Activated B cell treated with CpG ODN at 0.5 μM for 24 hours (primary cell): ENCODE measurements at regions of chr4 and their contacts with region 1.

Region 1: DNA sequence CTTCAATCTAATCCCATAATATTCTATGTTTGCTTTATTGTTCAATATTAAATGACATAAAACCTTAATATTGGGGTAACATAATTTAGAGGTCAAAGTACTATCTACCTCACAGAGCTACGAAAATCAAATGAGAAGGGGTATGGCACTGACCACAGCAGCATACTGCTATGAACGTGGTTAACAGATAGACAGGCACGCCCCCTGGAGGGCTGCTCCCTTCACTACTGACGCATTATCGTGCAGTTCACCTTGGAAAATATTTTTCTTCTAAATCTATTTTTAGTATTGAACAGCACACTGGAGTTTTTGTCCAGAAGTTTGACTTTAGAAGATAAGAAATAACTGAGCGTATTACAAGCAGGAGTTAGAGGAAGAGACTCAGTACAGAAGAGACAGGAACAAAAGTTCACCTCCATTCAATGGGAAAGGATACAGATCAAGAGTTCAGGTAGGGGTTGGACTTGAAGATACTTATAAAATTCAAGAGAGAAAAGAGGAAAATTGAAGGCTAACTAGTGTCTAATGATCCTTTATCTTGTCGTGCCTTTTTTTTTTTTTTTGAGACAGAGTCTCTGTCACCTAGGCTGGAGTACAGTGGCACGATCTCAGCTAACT is 22.7 kb downstream of the MAP9 start:
- DNase-seq: no peak
- ATAC-seq: peak; percentile 28
- H3K4me3 Mint-ChIP-seq: no peak overlapping the region
- H3K27ac Mint-ChIP-seq: no peak overlapping the region
- H3K4me1 Mint-ChIP-seq: no peaks in the 10 kb centered on the region
- H3K27me3 Mint-ChIP-seq: no peaks in the 10 kb centered on the region
- CTCF ChIP-seq: no peak

Region 2: GRCh38 chr4:154854362-154854761 is 499.7 kb before region 1 on chr4:
- CTCF ChIA-PET with region 1: no interaction called
- POLR2A ChIA-PET with region 1: no interaction called
- intact Hi-C with region 1: loop called (anchors 5 kb)
- DNase-seq: no peak
- ATAC-seq: no peak
- H3K4me3 Mint-ChIP-seq: no peak overlapping the region
- H3K27ac Mint-ChIP-seq: no peak overlapping the region
- H3K4me1 Mint-ChIP-seq: no peaks in the 10 kb centered on the region
- H3K27me3 Mint-ChIP-seq: peaks cover 2% of the 10 kb centered on the region
- CTCF ChIP-seq: no peak

Region 3: DNA sequence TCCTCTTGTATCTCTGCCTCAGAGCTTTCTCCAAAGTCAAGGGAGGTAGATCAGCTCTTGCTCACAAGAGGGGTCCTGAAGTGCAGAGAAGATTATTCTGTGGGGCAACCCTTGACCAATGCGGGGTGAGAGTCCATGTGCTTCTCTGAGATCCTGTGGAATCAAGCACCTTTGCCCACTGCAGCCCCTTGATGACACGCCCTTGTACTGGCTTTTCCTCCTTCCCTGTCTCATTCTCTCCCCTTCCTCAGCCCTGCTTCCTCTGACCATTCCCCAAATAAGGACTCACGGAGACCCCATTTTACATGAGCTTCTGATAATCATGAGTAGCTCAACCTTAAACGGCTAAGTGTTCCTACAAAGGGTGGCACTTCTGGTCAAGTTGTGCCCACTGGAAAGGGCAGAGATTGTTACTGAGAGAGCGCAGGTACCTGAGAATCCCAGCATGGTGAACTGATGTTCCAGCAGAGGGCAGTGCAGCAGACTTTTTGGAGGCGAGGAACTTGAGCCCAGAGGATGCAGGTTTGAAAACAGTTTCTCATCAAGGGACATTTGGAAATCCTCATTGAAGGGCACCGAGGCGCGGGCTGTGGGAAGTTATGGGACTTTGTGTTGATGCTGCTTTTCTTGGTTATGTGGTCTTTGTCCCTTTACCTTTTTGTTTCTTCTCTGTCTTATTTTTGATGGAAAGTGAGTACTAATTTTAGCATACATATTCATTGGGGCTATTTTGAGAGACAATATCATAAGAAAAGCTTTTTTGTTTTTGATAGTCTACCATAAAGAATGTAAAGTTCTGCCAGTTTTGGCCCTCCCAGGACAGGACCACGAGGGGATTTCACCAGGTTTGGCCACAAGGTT is 371.6 kb before region 1 on chr4:
- CTCF ChIA-PET with region 1: no interaction called
- POLR2A ChIA-PET with region 1: no interaction called
- intact Hi-C with region 1: loop called (anchors 1 kb)
- DNase-seq: no peak
- ATAC-seq: no peak
- H3K4me3 Mint-ChIP-seq: no peak overlapping the region
- H3K27ac Mint-ChIP-seq: no peak overlapping the region
- H3K4me1 Mint-ChIP-seq: no peaks in the 10 kb centered on the region
- H3K27me3 Mint-ChIP-seq: no peaks in the 10 kb centered on the region
- CTCF ChIP-seq: no peak